A549 (cell line): ENCODE measurements at regions of chr20 and their contacts with region 1.

Region 1: GRCh38 chr20:51800060-51800794 is 2.1 kb downstream of the SALL4 start:
- DNase-seq: peak; percentile 62 to 90
- ATAC-seq: peak; percentile 79 to 91
- H3K4me3 ChIP-seq: peak overlapping the region; percentile 84
- H3K27ac ChIP-seq: peak overlapping the region; percentile 95 to 96
- H3K4me1 ChIP-seq: peaks cover 30% of the 10 kb centered on the region
- CTCF ChIP-seq: peak; percentile 91
- EP300 ChIP-seq: no peak
- POLR2A ChIP-seq: no peak
- RAD21 ChIP-seq: peak; percentile 78 to 85

Region 2: DNA sequence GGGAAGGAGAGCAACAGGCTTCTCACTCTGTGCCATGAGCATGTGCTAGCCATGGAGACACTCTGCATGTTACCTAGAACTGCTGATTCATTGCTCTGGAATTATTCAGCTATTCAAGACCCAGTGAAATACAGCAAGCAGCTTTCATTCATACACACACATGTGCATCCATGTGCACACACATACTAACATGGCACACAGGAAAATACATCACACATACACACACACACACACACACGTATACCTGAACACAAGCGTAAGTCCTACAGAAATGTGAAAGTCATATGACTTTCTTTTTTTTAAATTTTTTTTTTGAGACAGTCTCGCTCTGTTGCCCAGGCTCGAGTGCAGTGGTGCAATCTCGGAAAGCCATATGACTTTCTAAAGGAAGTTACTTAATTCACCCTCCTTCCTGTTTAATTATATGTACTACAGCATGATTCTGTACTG is 149.5 kb before region 1 on chr20:
- CTCF ChIA-PET with region 1: interaction called, 11 read pairs
- POLR2A ChIA-PET with region 1: no interaction called
- DNase-seq: no peak
- ATAC-seq: peak; percentile 35 to 64; a peak in 2 of 6 replicates
- H3K4me3 ChIP-seq: no peak overlapping the region
- H3K27ac ChIP-seq: peak overlapping the region; percentile 42 to 70
- H3K4me1 ChIP-seq: peaks cover 8% of the 10 kb centered on the region; the same call in 2 of the 3 replicates
- CTCF ChIP-seq: no peak
- EP300 ChIP-seq: no peak
- POLR2A ChIP-seq: no peak
- RAD21 ChIP-seq: no peak

Region 3: DNA sequence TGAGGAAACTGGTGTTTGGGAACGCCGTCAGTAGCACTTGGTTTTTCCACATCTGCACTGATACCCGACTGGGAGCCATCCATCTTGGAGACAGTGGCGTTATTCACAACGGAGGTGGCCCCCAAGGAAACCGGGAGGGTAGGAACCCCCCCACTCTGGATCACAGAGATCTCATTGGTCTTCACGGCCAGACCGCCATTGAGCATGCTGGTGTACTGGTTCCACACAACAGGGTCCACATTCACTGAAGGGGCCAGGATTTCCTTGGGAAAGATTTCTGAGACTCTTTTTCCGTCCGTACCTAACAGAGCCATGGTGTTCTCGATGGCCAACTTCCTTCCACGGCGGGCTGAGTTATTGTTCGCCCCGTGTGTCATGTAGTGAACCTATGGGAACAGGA is 15.9 kb before region 1 on chr20:
- CTCF ChIA-PET with region 1: interaction called, 11 read pairs
- POLR2A ChIA-PET with region 1: no interaction called
- DNase-seq: no peak
- ATAC-seq: no peak
- H3K4me3 ChIP-seq: no peak overlapping the region
- H3K27ac ChIP-seq: no peak overlapping the region
- H3K4me1 ChIP-seq: no peaks in the 10 kb centered on the region
- CTCF ChIP-seq: no peak
- EP300 ChIP-seq: no peak
- POLR2A ChIP-seq: no peak
- RAD21 ChIP-seq: no peak

Region 4: GRCh38 chr20:51966291-51966971 is 166.2 kb after region 1 on chr20:
- CTCF ChIA-PET with region 1: interaction called, 18 read pairs
- POLR2A ChIA-PET with region 1: no interaction called
- DNase-seq: peak; percentile 71 to 86
- ATAC-seq: peak; percentile 99
- H3K4me3 ChIP-seq: no peak overlapping the region
- H3K27ac ChIP-seq: peak overlapping the region in 1 of 2 experiments; percentile 55; a peak in 4 of 6 replicates
- H3K4me1 ChIP-seq: peaks cover 8% of the 10 kb centered on the region; the same call in 1 of the 3 replicates
- CTCF ChIP-seq: peak; percentile 69
- EP300 ChIP-seq: no peak
- POLR2A ChIP-seq: no peak
- RAD21 ChIP-seq: peak; percentile 72 to 77

Region 5: DNA sequence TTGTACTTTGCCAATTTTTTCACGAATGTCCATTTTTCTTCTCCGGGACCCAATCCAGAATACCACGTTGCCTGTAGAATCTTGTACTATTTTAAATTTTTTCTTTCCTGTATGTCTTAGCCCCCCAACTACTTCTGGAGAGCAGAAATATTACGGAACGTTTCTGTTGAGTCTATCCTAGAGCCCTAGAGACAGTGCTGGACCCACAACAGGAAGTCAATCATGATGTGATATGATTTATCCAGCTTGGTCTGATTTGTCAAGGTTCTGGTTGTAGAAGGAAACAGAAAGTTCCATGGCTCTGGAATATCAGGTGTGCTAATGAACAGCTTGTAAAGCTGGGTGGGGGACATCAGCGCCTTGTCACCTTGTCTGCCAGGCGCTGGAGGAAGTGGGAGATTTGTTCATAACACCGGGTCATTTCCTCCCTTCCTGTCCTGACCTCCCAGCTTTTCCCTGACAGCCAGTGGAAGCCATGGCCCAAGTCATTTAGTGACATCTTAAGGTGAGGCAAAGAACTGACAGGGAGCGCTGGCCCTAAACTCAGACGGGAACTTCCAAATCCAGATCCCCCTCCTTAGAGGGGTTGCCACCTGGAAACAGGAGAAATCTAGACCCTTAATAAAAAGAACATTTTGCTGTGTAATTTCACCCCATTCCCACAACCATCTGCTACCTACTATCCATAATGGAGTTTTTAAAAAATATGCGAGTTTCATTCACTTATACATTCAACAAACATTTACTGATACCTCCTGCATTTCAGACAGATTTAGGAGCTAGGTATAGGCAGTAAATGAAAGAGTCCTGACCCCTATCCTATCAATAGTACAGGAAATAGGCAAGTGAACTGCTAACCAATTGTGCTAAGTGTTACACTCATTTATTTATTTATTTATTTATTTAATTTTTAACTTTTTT is 260.8 kb after region 1 on chr20:
- CTCF ChIA-PET with region 1: interaction called, 22 read pairs
- POLR2A ChIA-PET with region 1: no interaction called
- DNase-seq: peak; percentile 20 to 70
- ATAC-seq: peak; percentile 81
- H3K4me3 ChIP-seq: no peak overlapping the region
- H3K27ac ChIP-seq: peak overlapping the region in 1 of 2 experiments; percentile 53; a peak in 2 of 6 replicates
- H3K4me1 ChIP-seq: no peaks in the 10 kb centered on the region
- CTCF ChIP-seq: peak; percentile 42; the same call in 2 of the 3 replicates
- EP300 ChIP-seq: no peak
- POLR2A ChIP-seq: no peak
- RAD21 ChIP-seq: peak; percentile 69 to 73

Region 6: DNA sequence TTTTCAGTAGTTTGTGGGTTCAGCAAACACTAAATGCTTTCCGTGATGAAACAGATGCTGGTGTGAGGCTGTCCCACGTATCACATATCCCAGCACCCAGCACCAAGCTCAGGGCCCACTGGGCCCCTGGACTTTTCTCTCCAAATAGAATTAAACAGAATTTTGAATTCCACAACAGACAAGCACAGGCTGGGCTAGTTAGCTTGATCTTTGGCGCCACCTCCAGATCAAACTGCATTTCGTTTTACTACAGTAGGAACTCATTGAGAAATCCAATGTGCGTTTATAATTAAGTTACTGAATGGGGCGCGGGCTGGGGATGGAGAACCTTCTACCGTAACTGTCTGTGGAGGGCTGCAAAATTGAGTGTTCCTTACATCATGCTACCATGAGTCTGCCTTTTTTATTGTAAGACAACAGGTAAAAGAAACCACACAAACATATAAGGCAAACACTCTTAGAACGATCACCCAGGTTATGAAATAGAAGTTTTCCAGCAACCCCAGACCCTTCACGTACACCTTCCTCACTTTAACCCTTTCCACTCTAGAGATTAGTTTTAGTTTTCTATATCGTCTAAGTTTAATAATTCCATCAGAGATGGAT is 283.5 kb after region 1 on chr20:
- CTCF ChIA-PET with region 1: interaction called, 45 read pairs
- POLR2A ChIA-PET with region 1: interaction called, 3 read pairs
- DNase-seq: peak; percentile 63 to 69
- ATAC-seq: peak; percentile 79 to 88
- H3K4me3 ChIP-seq: no peak overlapping the region
- H3K27ac ChIP-seq: no peak overlapping the region
- H3K4me1 ChIP-seq: 0 out of 3 replicates have a peak, but pooled peaks cover 3% of the 10 kb centered on the region
- CTCF ChIP-seq: peak; percentile 80
- EP300 ChIP-seq: no peak
- POLR2A ChIP-seq: no peak
- RAD21 ChIP-seq: peak; percentile 93 to 95

Region 7: DNA sequence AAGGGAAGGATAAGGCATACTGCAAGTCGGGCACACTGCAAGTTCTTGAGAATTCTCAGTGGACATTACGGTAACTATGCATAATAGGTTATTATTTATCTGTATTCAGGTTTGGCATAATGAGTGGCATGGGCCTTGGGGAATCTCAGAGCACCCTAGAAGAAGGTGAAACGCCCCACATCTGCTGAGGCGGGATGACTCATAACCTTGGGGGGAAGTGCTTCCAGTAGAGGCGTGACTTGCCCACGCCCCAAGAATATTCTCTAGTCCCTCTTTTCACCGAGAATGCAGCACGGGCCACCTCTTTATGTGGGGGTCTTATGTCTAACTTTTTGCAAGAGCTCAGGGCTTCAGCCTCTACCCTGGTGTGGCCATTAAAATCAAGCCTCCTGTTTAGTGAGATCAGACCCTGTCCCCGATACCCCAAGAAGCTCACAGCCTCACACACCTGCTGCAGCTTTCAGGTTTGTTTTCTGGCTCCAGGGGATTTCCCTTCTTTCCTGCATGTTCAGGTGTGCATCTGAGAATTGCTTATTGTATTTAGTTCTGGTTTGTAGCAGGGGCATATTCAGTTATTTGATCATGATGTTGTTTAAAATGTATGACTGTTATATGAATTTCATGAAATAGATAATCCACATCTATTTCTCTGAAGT is 372.3 kb after region 1 on chr20:
- CTCF ChIA-PET with region 1: no interaction called
- POLR2A ChIA-PET with region 1: no interaction called
- DNase-seq: no peak
- ATAC-seq: no peak
- H3K4me3 ChIP-seq: no peak overlapping the region
- H3K27ac ChIP-seq: no peak overlapping the region
- H3K4me1 ChIP-seq: 0 out of 3 replicates have a peak, but pooled peaks cover 3% of the 10 kb centered on the region
- CTCF ChIP-seq: no peak
- EP300 ChIP-seq: no peak
- POLR2A ChIP-seq: no peak
- RAD21 ChIP-seq: no peak